Ascending aorta (tissue), 2 donors: ENCODE measurements at regions of chr15 and their contacts with region 1.

Region 1: DNA sequence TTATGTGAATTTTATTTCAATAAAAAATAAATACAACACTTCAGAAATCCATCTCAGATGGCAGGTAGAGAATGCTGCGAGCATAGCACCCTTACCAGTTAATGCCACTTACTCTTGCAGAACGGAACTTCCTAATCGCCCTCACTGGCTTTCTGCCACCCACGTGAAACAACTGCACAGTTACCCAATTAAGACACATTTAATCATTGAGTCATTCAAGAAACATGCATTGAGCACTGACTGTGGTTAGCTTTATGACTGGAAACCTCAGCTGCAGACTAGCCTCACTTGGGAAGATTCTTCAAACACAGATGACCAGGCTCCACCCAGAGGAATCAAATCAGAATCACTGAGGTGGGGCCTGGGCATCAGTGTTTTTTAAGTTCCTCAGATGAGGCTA is 5.6 kb upstream of the MFGE8 start:
- DNase-seq: peak; percentile 69 to 96
- H3K4me3 ChIP-seq: no peak overlapping the region
- H3K27ac ChIP-seq: peak overlapping the region; percentile 73 to 76
- H3K4me1 ChIP-seq: peaks cover 0 to 18% of the 10 kb centered on the region in 2 donors
- H3K27me3 ChIP-seq: no peaks in the 10 kb centered on the region
- CTCF ChIP-seq: no peak

Region 2: DNA sequence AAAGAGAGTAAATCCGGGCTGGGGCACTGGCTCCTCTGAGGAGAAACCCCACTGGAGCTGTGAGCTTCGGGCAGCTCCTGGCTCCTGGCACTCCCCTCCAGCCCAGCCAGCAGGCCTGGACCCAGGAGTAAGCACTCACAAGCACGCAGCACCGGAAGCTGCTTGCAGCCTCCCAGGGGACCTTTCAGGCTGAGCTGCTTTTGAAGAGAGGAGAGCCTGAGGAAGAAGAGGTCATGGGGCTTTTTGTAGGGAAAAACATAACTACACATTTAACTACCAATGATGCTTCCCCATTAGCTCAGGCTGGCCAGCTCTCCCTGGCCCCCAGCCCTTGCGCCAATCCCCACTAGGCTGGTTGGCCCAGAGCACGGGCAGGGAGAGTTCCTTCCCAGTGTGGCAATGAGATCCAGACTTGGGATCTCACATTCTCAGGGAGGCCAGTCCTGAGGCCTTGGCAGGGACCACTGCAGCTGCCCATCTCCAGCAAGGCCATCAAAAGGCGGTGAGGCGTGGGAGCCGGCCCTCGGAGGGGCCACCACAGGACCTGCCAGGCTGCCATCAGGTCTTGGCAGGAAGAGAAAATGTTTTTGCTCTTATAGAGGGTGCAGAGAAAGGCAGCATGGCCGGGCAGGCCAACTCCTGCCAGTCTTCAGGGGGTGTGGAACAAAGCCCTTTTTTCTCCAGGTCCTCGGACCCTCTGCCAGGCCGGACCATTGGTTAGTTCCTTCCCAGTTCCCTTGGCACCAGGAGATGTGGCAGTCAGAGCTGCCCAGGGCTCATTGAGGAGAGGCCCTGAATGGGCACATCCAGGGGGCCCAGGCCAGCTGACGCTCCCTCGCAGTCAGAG is 35.9 kb after region 1 on chr15:
- intact Hi-C with region 1: loop called (anchors 2 kb)
- DNase-seq: peak; percentile 65 to 90
- H3K4me3 ChIP-seq: no peak overlapping the region
- H3K27ac ChIP-seq: peak overlapping the region; percentile 85 to 95
- H3K4me1 ChIP-seq: peaks cover 0 to 7% of the 10 kb centered on the region in 2 donors
- H3K27me3 ChIP-seq: no peaks in the 10 kb centered on the region
- CTCF ChIP-seq: no peak